ENCODE measurements at regions of chr14 and their contacts with region 1.

Region 1: DNA sequence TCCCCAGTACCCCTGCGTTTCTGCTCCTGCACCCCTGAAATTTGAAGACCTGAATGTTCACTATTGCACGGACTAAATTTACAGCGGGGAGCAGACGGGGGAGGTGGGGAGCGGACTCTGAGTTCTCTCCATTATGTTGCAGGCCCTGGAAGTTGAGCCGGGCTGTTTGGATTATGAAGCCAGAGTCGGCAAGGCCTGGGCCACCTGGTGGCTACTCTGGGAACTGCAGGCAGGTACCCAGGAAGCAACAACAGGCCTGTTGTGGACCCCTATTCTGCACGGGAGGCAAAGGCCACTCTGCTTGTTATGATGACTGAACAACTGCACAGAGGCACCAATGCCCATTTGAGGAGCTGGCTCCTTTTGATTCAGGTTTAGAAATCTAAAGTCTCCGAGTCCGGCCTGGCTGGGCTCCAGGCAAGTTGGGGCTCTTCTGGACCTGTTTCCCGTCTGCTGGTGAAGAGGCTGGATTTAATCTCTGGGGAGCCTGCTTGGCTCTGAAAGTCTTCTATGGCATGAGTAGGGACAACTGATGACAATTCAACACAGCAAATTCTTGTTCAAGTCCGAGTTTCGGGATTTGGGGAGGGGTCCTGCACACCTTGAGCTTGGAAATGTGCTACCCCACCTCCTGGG is 34.1 kb upstream of the FAM181A start:
- DNase-seq: peak; percentile 52 to 89 (median 62)
- ATAC-seq: peak; percentile 87
- H3K4me3 ChIP-seq: no peak overlapping the region
- H3K27ac ChIP-seq: no peak overlapping the region
- H3K4me1 ChIP-seq: no peaks in the 10 kb centered on the region
- H3K27me3 ChIP-seq: peaks cover 0 to 34% of the 10 kb centered on the region in 2 donors
- CTCF ChIP-seq: peak; percentile 93 to 98

Region 2: GRCh38 chr14:93655078-93655750 is 237.8 kb before region 1 on chr14:
- intact Hi-C with region 1: loop called in 1 of 2 experiments (anchors 5 kb)
- DNase-seq: peak in 2 of 4 donors; percentile 38 to 61
- ATAC-seq: peak; percentile 58
- H3K4me3 ChIP-seq: no peak overlapping the region
- H3K27ac ChIP-seq: no peak overlapping the region
- H3K4me1 ChIP-seq: no peaks in the 10 kb centered on the region
- H3K27me3 ChIP-seq: peaks cover 0 to 39% of the 10 kb centered on the region in 2 donors
- CTCF ChIP-seq: peak; percentile 30 to 50

Region 3: GRCh38 chr14:94164685-94165431 is 271.8 kb after region 1 on chr14:
- intact Hi-C with region 1: no loop called
- DNase-seq: no peak
- ATAC-seq: peak; percentile 22
- H3K4me3 ChIP-seq: no peak overlapping the region
- H3K27ac ChIP-seq: no peak overlapping the region
- H3K4me1 ChIP-seq: peaks cover 0 to 17% of the 10 kb centered on the region in 2 donors
- H3K27me3 ChIP-seq: peaks cover 0 to 4% of the 10 kb centered on the region in 2 donors
- CTCF ChIP-seq: no peak

Region 4: GRCh38 chr14:94269156-94269555 is 376.1 kb after region 1 on chr14:
- intact Hi-C with region 1: no loop called
- DNase-seq: no peak
- ATAC-seq: no peak
- H3K4me3 ChIP-seq: no peak overlapping the region
- H3K27ac ChIP-seq: no peak overlapping the region
- H3K4me1 ChIP-seq: no peaks in the 10 kb centered on the region
- H3K27me3 ChIP-seq: no peaks in the 10 kb centered on the region
- CTCF ChIP-seq: no peak